ENCODE measurements at regions of chr13 and their contacts with region 1.

Region 1: DNA sequence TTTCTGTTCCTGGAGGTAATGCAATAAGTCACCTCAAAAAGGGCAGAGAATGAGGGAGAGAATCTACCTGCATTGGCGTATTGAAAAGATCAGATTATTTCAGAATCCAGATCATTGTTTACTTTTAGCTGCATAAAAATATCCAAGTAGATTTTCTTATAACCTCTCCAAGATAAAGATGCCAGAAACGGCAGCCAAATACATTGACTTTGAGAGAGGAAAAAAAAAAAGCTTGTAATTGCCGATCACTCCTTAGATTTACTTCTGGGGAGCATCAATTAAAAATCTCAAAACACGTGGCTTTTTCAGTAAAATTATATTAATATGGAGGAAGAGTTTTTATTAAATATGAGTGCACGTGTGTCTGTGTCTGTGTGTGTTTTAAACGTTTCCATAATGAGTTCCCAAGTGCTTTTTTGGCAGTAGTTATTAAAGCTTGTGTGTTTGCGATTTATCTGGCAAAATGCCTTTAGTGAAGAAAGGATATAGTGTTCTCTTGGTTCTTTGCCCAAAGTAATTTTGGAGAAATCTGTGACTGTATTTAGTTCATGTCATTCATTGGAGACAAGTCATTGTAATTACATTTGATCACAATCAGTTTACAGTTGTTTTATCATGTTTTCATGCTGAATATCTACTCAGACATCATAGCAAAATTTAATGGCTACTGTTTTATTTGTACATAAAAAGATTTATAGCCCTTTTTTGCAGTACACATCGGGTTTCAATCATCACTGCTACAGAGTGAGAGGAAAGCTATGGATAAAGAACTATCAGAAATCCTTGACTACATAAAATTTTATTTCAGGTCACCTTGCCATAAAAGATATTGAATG is 176.1 kb downstream of the TM9SF2 start:
- DNase-seq: no peak
- ATAC-seq: no peak
- H3K4me3 ChIP-seq: no peak overlapping the region
- H3K27ac ChIP-seq: no peak overlapping the region
- H3K4me1 ChIP-seq: no peaks in the 10 kb centered on the region
- H3K27me3 ChIP-seq: no peaks in the 10 kb centered on the region; the same call in 1 of the 2 replicates
- CTCF ChIP-seq: no peak
- POLR2A ChIP-seq: no peak
- RAD21 ChIP-seq: no peak

Region 2: GRCh38 chr13:99606324-99607066 is 70.8 kb before region 1 on chr13:
- CTCF ChIA-PET with region 1: no interaction called
- POLR2A ChIA-PET with region 1: no interaction called
- dilution Hi-C with region 1: no loop called
- in situ Hi-C with region 1: no loop called
- intact Hi-C with region 1: no loop called
- DNase-seq: peak; percentile 71
- ATAC-seq: peak; percentile 97
- H3K4me3 ChIP-seq: peak within 1 kb of the TSS; percentile 65
- H3K27ac ChIP-seq: peak within 1 kb of the TSS; percentile 12
- H3K4me1 ChIP-seq: no peaks in the 10 kb centered on the region; the same call in 1 of the 2 replicates
- H3K27me3 ChIP-seq: peaks cover 4% of the 10 kb centered on the region; the same call in 1 of the 2 replicates
- CTCF ChIP-seq: no peak
- POLR2A ChIP-seq: no peak; the same call in 1 of the 2 replicates
- RAD21 ChIP-seq: no peak

Region 3: GRCh38 chr13:100024023-100024422 is 346.7 kb after region 1 on chr13:
- CTCF ChIA-PET with region 1: no interaction called
- POLR2A ChIA-PET with region 1: interaction called, 14 read pairs
- dilution Hi-C with region 1: no loop called
- in situ Hi-C with region 1: no loop called
- intact Hi-C with region 1: no loop called
- DNase-seq: no peak
- ATAC-seq: no peak
- H3K4me3 ChIP-seq: no peak overlapping the region
- H3K27ac ChIP-seq: no peak overlapping the region
- H3K4me1 ChIP-seq: no peaks in the 10 kb centered on the region
- H3K27me3 ChIP-seq: peaks cover 3% of the 10 kb centered on the region
- CTCF ChIP-seq: no peak
- POLR2A ChIP-seq: no peak
- RAD21 ChIP-seq: no peak